ENCODE measurements at regions of chr20 and their contacts with region 1.

Region 1: DNA sequence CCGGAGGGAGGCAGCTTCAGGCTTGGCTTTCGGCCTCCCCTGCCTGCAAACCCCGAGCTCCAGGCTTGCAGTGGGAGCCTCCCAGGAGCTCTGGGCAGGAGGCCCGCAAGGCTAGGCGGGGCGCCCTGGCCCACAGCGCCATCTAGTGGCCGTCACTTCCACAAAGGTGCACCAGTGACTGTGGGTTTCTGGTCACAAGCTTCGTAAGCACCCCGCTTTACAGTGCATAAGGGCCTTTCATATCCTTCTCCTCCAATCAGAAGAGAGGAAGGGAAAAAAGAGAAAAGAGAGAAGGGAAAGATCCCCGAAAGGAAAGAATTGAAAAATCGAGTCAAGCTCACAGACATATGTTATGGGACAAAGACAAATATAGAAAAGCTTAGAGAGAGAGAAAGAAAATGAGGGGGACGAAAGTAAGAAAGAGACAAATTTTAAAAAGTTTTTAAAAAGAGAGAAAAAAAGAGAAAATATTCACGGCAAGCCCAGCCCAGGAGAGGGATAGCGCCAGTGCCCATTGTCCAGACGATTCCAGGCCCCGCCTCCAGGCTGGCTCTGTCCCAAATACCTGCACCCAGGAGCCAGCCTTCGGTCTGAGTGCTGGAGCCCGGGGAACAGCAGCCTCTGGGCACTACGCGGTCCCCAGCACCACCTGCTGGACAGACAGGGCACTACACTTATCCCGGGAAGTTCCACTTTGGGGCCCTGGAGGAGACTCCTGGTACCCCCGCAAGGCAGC is 207.1 kb downstream of the PREX1 start:
- DNase-seq: peak; percentile 86 to 92 (median 88)
- ATAC-seq: peak; percentile 96
- H3K4me3 ChIP-seq: no peak overlapping the region
- H3K27ac ChIP-seq: no peak overlapping the region
- H3K4me1 ChIP-seq: peaks cover 9 to 21% of the 10 kb centered on the region in 2 experiments; a peak in 4 of 5 replicates
- H3K27me3 ChIP-seq: peaks cover 0 to 31% of the 10 kb centered on the region in 2 experiments; a peak in 3 of 5 replicates
- CTCF ChIP-seq: peak; percentile 85 to 94 (median 89)
- EP300 ChIP-seq: no peak
- POLR2A ChIP-seq: no peak
- RAD21 ChIP-seq: peak; percentile 71 to 89

Region 2: DNA sequence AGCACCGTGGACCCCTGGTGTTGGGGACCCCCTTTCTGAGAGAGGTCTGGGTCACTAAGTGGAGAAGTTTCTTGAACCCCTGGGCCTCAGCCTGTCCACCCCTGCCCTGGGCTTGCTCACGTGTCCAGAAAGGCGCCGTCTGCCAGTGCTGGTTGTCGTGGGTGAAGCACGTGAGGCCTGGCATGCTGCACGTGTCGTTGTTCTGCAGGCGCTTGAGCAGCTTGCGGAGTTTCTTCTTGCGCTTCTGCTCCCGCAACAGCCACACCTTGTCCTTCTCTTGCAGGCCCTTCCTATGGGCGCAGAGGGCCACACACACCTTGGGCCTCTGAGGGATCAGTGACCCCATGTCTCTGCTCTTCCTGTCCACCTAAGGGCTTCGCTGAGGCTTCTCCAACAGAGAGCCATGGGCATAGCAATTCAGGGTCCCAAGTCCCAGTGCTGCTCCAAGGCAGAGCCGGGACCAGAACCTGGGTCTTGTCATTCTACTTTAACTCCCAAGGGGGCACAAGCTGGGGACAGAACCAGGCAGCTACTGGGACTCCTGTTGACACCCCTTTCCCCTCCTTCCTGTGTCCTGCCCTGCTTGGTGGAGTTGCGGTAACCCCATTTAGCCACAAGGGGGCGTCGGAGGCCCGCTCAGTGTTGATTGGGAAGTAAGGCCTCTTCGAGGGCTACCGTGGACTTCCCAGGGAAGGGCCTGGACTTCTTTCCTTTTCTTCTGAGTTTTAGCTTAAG is 957.2 kb before region 1 on chr20:
- CTCF ChIA-PET with region 1: interaction called, 5 read pairs
- POLR2A ChIA-PET with region 1: no interaction called
- in situ Hi-C with region 1: no loop called
- intact Hi-C with region 1: loop called (anchors 5 kb)
- DNase-seq: peak; percentile 81 to 85 (median 82)
- ATAC-seq: peak; percentile 89
- H3K4me3 ChIP-seq: no peak overlapping the region
- H3K27ac ChIP-seq: no peak overlapping the region
- H3K4me1 ChIP-seq: peaks cover 0 to 11% of the 10 kb centered on the region in 2 experiments; a peak in 3 of 5 replicates
- H3K27me3 ChIP-seq: peaks cover 36 to 40% of the 10 kb centered on the region in 2 experiments
- CTCF ChIP-seq: peak; percentile 88 to 97 (median 89)
- EP300 ChIP-seq: no peak
- POLR2A ChIP-seq: no peak
- RAD21 ChIP-seq: peak; percentile 62 to 77

Region 3: GRCh38 chr20:47672166-47672565 is 948.5 kb before region 1 on chr20:
- CTCF ChIA-PET with region 1: interaction called, 22 read pairs
- POLR2A ChIA-PET with region 1: no interaction called
- in situ Hi-C with region 1: loop called (anchors 5 kb)
- intact Hi-C with region 1: loop called (anchors 5 kb)
- DNase-seq: no peak
- ATAC-seq: no peak
- H3K4me3 ChIP-seq: no peak overlapping the region
- H3K27ac ChIP-seq: no peak overlapping the region
- H3K4me1 ChIP-seq: peaks cover 0 to 8% of the 10 kb centered on the region in 2 experiments; a peak in 1 of 5 replicates
- H3K27me3 ChIP-seq: peaks cover 59 to 90% of the 10 kb centered on the region in 2 experiments
- CTCF ChIP-seq: no peak
- EP300 ChIP-seq: no peak
- POLR2A ChIP-seq: no peak
- RAD21 ChIP-seq: no peak

Region 4: DNA sequence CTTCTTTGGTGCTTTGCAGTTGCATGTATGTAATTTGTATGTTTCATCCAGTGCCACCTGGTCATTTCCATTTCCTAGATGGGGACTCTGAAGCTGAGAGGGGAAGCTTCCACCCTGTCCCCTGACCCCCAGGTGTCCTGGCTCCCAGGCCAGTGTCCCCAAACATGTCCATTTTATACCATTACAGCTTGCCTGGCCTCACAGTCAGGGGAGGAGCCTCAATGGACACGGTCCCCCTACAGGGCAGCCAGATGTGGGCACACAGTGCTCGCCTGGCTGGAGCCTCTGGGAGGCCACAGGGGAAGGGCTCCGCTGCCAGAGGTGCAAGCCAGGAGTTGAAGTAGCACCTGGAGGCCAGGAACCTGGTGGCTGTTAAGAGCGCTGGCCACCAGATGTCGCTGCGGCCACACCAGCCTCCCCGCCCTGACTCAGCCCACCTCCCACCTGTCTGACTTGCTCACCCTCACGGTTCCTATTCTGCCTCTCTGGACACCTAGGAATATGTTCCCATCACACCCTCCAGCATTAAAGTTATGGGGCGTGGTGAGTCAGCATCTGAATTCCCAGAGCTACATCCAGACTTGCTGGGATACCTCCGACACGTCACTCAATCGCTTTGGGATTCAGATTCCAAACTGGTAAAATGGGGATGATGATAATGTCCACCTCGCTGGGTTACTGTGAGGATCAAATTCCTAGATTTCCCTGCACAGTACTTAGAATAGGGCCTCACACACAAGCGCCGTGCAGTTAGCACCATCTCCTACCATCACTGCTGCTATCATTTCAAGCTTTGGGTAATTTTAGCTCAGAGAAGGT is 942.8 kb before region 1 on chr20:
- CTCF ChIA-PET with region 1: interaction called, 22 read pairs
- POLR2A ChIA-PET with region 1: no interaction called
- in situ Hi-C with region 1: loop called (anchors 5 kb)
- intact Hi-C with region 1: loop called (anchors 5 kb)
- DNase-seq: peak; percentile 69 to 85 (median 78)
- ATAC-seq: peak; percentile 93
- H3K4me3 ChIP-seq: no peak overlapping the region
- H3K27ac ChIP-seq: no peak overlapping the region
- H3K4me1 ChIP-seq: peaks cover 0 to 13% of the 10 kb centered on the region in 2 experiments; a peak in 2 of 5 replicates
- H3K27me3 ChIP-seq: peaks cover 29 to 84% of the 10 kb centered on the region in 2 experiments; a peak in 4 of 5 replicates
- CTCF ChIP-seq: peak; percentile 83 to 91 (median 87)
- EP300 ChIP-seq: no peak
- POLR2A ChIP-seq: no peak
- RAD21 ChIP-seq: peak; percentile 60 to 88

Region 5: GRCh38 chr20:47725248-47725973 is 895.3 kb before region 1 on chr20:
- CTCF ChIA-PET with region 1: interaction called, 5 read pairs
- POLR2A ChIA-PET with region 1: no interaction called
- in situ Hi-C with region 1: no loop called
- intact Hi-C with region 1: loop called (anchors 2 kb)
- DNase-seq: peak; percentile 85 to 89 (median 88)
- ATAC-seq: peak; percentile 98
- H3K4me3 ChIP-seq: no peak overlapping the region
- H3K27ac ChIP-seq: no peak overlapping the region
- H3K4me1 ChIP-seq: 0 out of 5 replicates have a peak, but pooled peaks cover 0 to 6% of the 10 kb centered on the region in 2 experiments
- H3K27me3 ChIP-seq: peaks cover 16 to 45% of the 10 kb centered on the region in 2 experiments; a peak in 4 of 5 replicates
- CTCF ChIP-seq: peak; percentile 84 to 94 (median 94)
- EP300 ChIP-seq: no peak
- POLR2A ChIP-seq: no peak
- RAD21 ChIP-seq: peak; percentile 65 to 80

Region 6: DNA sequence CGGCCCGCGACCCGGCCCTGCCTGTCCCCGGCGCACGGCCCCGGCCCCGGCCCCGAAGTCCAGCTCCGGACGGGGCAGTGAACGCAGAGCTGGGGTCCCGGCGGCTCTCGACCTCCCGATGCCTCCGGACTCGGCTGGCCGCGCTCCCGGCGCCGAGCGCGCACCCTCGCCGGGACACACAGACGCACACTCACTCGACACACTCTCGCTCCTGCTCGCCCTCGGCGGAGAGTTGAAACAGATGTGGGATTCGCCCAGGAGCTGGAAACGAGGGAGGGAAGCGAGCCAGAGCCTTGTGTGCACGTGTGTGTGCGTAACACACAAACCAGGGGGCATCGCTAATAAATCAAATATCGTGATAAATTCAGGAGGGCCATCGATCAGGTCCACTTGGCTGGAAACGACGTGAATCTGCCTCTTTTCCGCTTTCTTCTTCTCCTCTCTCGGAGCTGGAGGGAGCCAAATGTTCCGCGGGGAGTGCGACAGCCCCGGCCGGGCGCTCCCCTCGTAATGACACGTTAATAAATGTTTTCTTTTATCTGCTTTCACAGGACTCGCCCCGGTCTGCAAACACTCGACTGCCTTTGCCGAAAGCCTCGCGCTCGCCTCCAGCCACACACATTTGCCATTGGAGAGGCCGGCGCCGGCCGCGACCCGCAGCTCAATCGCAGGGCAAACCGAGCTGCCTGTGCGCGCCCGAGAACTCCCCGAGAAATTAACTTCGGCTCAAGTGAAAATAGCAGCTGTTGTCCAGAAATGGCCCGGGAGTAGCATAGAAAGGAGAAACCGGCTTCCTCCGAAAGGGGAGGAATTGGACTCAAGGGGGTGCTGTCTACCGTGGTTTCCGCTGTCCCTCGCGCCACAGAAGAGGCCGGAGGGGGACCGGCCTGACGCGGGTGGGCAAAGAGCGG is 834.6 kb before region 1 on chr20:
- CTCF ChIA-PET with region 1: interaction called, 11 read pairs
- POLR2A ChIA-PET with region 1: no interaction called
- in situ Hi-C with region 1: no loop called
- intact Hi-C with region 1: no loop called
- DNase-seq: peak; percentile 35 to 48 (median 46)
- ATAC-seq: peak; percentile 84
- H3K4me3 ChIP-seq: no peak overlapping the region
- H3K27ac ChIP-seq: no peak overlapping the region
- H3K4me1 ChIP-seq: peaks cover 0 to 7% of the 10 kb centered on the region in 2 experiments; a peak in 1 of 5 replicates
- H3K27me3 ChIP-seq: peaks cover 25 to 53% of the 10 kb centered on the region in 2 experiments
- CTCF ChIP-seq: peak; percentile 54 to 60 (median 57)
- EP300 ChIP-seq: no peak
- POLR2A ChIP-seq: no peak
- RAD21 ChIP-seq: peak; percentile 52 to 64

Measured in K562 (cell line).